A549 (cell line): ENCODE measurements at regions of chr6 and their contacts with region 1.

Region 1: GRCh38 chr6:134123666-134124208 is 71.3 kb upstream of the SLC2A12 start:
- DNase-seq: peak; percentile 19 to 90
- ATAC-seq: peak; percentile 98 to 99
- H3K4me3 ChIP-seq: no peak overlapping the region
- H3K27ac ChIP-seq: peak overlapping the region; percentile 39 to 40; a peak in 3 of 6 replicates
- H3K4me1 ChIP-seq: no peaks in the 10 kb centered on the region
- CTCF ChIP-seq: peak; percentile 78
- EP300 ChIP-seq: no peak
- POLR2A ChIP-seq: no peak
- RAD21 ChIP-seq: peak; percentile 54 to 56

Region 2: GRCh38 chr6:134111062-134111677 is 12.6 kb before region 1 on chr6:
- CTCF ChIA-PET with region 1: interaction called, 61 read pairs
- POLR2A ChIA-PET with region 1: no interaction called
- DNase-seq: peak; percentile 53 to 72
- ATAC-seq: peak; percentile 14 to 44; a peak in 3 of 6 replicates
- H3K4me3 ChIP-seq: no peak overlapping the region
- H3K27ac ChIP-seq: no peak overlapping the region; a peak in 1 of 6 replicates
- H3K4me1 ChIP-seq: peaks cover 27% of the 10 kb centered on the region
- CTCF ChIP-seq: peak; percentile 75
- EP300 ChIP-seq: no peak
- POLR2A ChIP-seq: no peak
- RAD21 ChIP-seq: peak; percentile 32 to 46; a peak in 2 of 5 replicates

Region 3: GRCh38 chr6:134138226-134138975 is 14.7 kb after region 1 on chr6:
- CTCF ChIA-PET with region 1: interaction called, 13 read pairs
- POLR2A ChIA-PET with region 1: no interaction called
- DNase-seq: no peak
- ATAC-seq: no peak
- H3K4me3 ChIP-seq: no peak overlapping the region
- H3K27ac ChIP-seq: no peak overlapping the region
- H3K4me1 ChIP-seq: no peaks in the 10 kb centered on the region
- CTCF ChIP-seq: no peak
- EP300 ChIP-seq: no peak
- POLR2A ChIP-seq: no peak
- RAD21 ChIP-seq: no peak